ENCODE measurements at regions of chrX and their contacts with region 1.

Region 1: GRCh38 chrX:65581661-65582339 is 47.2 kb upstream of the LAS1L start:
- DNase-seq: peak; percentile 30 to 77 (median 45)
- ATAC-seq: peak; percentile 57
- H3K4me3 ChIP-seq: no peak overlapping the region
- H3K4me3 Mint-ChIP-seq: no peak overlapping the region
- H3K27ac ChIP-seq: no peak overlapping the region
- H3K27ac Mint-ChIP-seq: no peak overlapping the region
- H3K4me1 ChIP-seq: peaks cover 6% of the 10 kb centered on the region
- H3K4me1 Mint-ChIP-seq: peaks cover 6% of the 10 kb centered on the region
- H3K27me3 ChIP-seq: no peaks in the 10 kb centered on the region
- H3K27me3 Mint-ChIP-seq: no peaks in the 10 kb centered on the region
- CTCF ChIP-seq: peak; percentile 63

Region 2: DNA sequence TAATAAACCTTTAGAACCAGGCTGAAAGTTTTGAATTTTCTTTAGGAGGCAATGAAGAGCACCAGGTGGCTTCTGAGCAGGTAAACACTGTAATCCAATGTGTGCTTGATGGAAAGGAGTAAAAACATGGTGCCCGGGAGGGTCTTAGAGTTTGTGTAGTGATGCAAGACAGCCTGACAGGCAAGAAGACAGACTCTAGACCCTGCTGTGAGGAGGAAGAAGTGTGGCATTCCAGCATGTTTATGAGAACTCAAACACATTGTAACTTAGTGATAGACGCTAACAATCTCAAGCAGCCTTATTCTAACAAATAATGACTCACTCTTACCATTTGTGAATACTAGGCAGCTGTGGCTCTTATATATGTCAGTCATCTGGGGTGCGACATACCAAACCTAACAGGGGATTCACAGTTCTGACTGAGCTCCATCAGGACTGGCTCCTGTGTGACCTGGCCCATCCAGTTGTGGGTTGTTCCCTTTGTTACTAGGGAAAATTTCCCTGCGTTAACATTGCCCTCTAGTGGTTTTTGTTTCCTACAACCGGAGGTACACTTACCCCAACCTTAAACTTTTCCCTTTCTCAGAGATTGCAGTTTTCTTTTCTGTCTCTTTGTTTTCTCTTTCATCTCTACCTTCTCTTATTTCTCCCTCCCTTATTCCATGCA is 404.3 kb after region 1 on chrX:
- CTCF ChIA-PET with region 1: interaction called, 4 read pairs
- POLR2A ChIA-PET with region 1: no interaction called
- intact Hi-C with region 1: loop called (anchors 1 kb)
- DNase-seq: peak in 12 of 14 experiments; percentile 4 to 81 (median 28)
- ATAC-seq: peak; percentile 90
- H3K4me3 ChIP-seq: no peak overlapping the region
- H3K4me3 Mint-ChIP-seq: no peak overlapping the region
- H3K27ac ChIP-seq: no peak overlapping the region
- H3K27ac Mint-ChIP-seq: peak overlapping the region; percentile 79
- H3K4me1 ChIP-seq: peaks cover 11% of the 10 kb centered on the region
- H3K4me1 Mint-ChIP-seq: peaks cover 25% of the 10 kb centered on the region
- H3K27me3 ChIP-seq: no peaks in the 10 kb centered on the region
- H3K27me3 Mint-ChIP-seq: no peaks in the 10 kb centered on the region
- CTCF ChIP-seq: peak; percentile 52

Region 3: GRCh38 chrX:66110112-66110511 is 528.3 kb after region 1 on chrX:
- CTCF ChIA-PET with region 1: no interaction called
- POLR2A ChIA-PET with region 1: interaction called, 3 read pairs
- intact Hi-C with region 1: loop called in 1 of 2 experiments (anchors 2 kb)
- DNase-seq: peak in 5 of 14 experiments; percentile 0 to 52 (median 18)
- ATAC-seq: no peak
- H3K4me3 ChIP-seq: no peak overlapping the region
- H3K4me3 Mint-ChIP-seq: no peak overlapping the region
- H3K27ac ChIP-seq: no peak overlapping the region
- H3K27ac Mint-ChIP-seq: no peak overlapping the region
- H3K4me1 ChIP-seq: peaks cover 4% of the 10 kb centered on the region
- H3K4me1 Mint-ChIP-seq: peaks cover 13% of the 10 kb centered on the region
- H3K27me3 ChIP-seq: no peaks in the 10 kb centered on the region
- H3K27me3 Mint-ChIP-seq: no peaks in the 10 kb centered on the region
- CTCF ChIP-seq: peak; percentile 54

Region 4: GRCh38 chrX:66408507-66408906 is 826.7 kb after region 1 on chrX:
- CTCF ChIA-PET with region 1: no interaction called
- POLR2A ChIA-PET with region 1: no interaction called
- intact Hi-C with region 1: loop called (anchors 1 kb)
- DNase-seq: peak in 3 of 14 experiments; percentile 14 to 29 (median 25)
- ATAC-seq: no peak
- H3K4me3 ChIP-seq: no peak overlapping the region
- H3K4me3 Mint-ChIP-seq: no peak overlapping the region
- H3K27ac ChIP-seq: no peak overlapping the region
- H3K27ac Mint-ChIP-seq: no peak overlapping the region
- H3K4me1 ChIP-seq: no peaks in the 10 kb centered on the region
- H3K4me1 Mint-ChIP-seq: no peaks in the 10 kb centered on the region
- H3K27me3 ChIP-seq: no peaks in the 10 kb centered on the region
- H3K27me3 Mint-ChIP-seq: no peaks in the 10 kb centered on the region
- CTCF ChIP-seq: peak; percentile 14

Region 5: DNA sequence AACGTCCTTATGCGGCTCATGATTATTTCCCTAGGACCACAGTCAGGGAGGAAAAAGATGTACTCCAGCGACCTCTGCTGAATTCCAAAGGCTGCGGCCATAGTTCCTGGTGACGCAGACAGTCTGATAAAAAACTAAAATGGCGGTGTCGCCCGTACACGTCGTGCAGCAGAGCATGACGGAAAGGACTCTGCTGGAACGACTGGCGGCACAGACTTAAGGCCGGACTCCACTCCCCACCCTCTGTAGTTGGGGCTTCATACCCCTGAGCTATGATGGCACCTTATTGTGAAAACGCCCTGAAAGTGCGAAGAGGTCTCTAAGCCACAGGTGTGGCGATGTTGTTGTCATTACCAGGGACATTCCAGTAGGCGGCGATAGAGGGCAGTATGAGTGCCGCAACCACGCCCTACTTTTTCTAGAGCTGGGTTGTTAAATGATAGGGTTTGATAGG is 1147.0 kb after region 1 on chrX:
- CTCF ChIA-PET with region 1: no interaction called
- POLR2A ChIA-PET with region 1: interaction called, 4 read pairs
- intact Hi-C with region 1: loop called in 1 of 2 experiments (anchors 2 kb)
- DNase-seq: peak; percentile 24 to 76 (median 36)
- ATAC-seq: peak; percentile 82
- H3K4me3 ChIP-seq: peak overlapping the region; percentile 58
- H3K4me3 Mint-ChIP-seq: peak overlapping the region; percentile 95
- H3K27ac ChIP-seq: peak overlapping the region; percentile 40 to 46
- H3K27ac Mint-ChIP-seq: peak overlapping the region; percentile 97
- H3K4me1 ChIP-seq: no peaks in the 10 kb centered on the region
- H3K4me1 Mint-ChIP-seq: peaks cover 5% of the 10 kb centered on the region
- H3K27me3 ChIP-seq: no peaks in the 10 kb centered on the region
- H3K27me3 Mint-ChIP-seq: no peaks in the 10 kb centered on the region
- CTCF ChIP-seq: peak; percentile 60